Heart left ventricle (tissue), 16 donors: ENCODE measurements at regions of chr13 and their contacts with region 1.

Region 1: DNA sequence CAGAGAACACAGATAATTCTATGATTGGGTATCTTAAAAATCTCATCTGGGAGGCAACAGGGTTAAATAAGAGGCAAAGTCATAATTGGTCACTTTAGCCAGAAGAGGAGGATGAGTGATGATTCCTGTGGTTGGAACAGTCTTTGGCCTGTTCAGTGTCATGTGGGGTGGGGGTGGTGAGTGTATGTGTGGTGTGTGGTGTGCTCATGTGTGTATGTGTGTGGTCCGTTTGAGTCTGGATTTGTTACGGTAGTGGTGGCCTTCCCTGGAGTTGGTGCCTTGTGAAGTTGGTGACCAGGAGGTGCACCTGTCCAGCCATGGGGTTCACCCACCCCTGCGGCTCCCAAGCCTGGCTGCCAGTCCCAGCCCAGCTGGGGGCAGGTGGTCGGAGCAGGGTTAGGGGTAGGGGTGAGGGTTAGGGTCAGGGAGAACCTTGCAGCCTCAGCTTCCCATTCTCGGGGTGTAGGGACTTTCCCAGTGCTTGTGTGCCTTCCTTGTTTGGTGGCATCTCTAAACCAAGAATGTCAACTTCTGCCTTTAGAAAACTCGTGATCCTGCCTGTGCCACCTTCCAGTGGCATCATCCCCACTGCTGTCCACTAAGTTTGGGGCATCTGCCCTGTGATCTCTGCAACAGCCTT is 97.5 kb downstream of the RAB20 start:
- DNase-seq: no peak
- ATAC-seq: peak in 2 of 4 donors; percentile 14 to 33
- H3K4me3 ChIP-seq: no peak overlapping the region
- H3K27ac ChIP-seq: no peak overlapping the region
- H3K4me1 ChIP-seq: peaks cover 0 to 5% (median 0%) of the 10 kb centered on the region in 12 donors
- H3K27me3 ChIP-seq: no peaks in the 10 kb centered on the region
- CTCF ChIP-seq: no peak
- POLR2A ChIP-seq: no peak

Region 2: DNA sequence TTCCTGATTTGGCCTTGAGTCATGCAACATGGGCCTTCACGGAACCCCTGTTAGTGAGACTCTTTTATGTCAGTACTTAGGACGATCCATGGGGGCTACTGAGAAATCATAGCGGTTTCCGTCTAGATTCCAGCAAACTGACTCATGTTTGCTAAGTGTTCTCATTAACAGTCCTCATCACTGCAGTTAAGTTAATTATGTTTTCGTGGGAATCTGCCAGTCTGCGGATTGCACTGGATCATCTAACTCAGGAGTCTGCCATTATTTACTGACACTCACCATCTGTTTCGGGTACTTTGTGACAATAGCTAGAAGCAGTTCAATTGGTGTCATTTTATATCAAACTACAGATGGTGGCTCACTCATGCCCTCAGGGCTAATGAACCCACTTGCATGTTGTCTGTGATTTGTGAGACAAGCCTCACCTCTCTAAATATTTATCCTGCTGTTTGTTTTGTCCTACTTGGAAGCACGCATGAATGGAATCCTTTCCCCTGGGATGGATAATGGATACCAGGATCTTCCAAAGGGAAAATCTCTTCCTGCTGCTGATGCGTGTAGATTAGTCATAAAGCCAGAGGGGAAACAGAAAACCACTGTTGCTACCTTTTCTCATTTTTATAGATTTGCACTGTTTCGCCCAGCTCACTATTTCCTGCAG is 35.8 kb after region 1 on chr13:
- intact Hi-C with region 1: no loop called
- DNase-seq: no peak
- ATAC-seq: no peak
- H3K4me3 ChIP-seq: no peak overlapping the region
- H3K27ac ChIP-seq: no peak overlapping the region
- H3K4me1 ChIP-seq: peaks cover 0 to 13% (median 6%) of the 10 kb centered on the region in 12 donors
- H3K27me3 ChIP-seq: no peaks in the 10 kb centered on the region
- CTCF ChIP-seq: no peak
- POLR2A ChIP-seq: no peak

Region 3: DNA sequence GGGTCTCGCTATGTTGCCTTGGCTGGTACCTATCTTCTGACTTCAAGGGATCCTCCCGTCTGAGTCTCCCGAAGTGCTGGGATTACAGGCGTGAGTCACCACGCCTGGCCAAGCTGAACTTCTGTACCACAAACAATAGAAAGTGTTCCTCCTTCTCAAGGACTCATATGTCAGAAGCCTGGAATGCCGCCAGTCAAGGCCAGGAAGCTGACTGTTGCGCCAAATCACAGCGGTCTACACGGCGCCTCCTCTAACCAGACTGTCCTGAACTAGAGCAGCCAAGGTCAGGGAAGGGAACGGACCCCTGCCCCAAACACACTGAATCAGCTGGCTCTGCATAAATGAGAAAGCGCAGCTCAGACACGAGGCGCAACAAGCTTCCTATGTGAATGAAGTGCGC is 82.9 kb after region 1 on chr13:
- intact Hi-C with region 1: loop called in 2 of 10 experiments (anchors 5 to 10 kb)
- DNase-seq: peak; percentile 85 to 94 (median 87)
- ATAC-seq: peak; percentile 76 to 92 (median 89)
- H3K4me3 ChIP-seq: no peak overlapping the region
- H3K27ac ChIP-seq: peak overlapping the region in 11 of 12 donors; percentile 29 to 82 (median 48)
- H3K4me1 ChIP-seq: peaks cover 0 to 46% (median 26%) of the 10 kb centered on the region in 12 donors
- H3K27me3 ChIP-seq: no peaks in the 10 kb centered on the region
- CTCF ChIP-seq: no peak
- POLR2A ChIP-seq: no peak